Esophagus squamous epithelium (tissue), 5 donors: ENCODE measurements at regions of chr20 and their contacts with region 1.

Region 1: GRCh38 chr20:47356526-47357295 is at the start of gene ZMYND8:
- DNase-seq: peak; percentile 49
- H3K4me3 ChIP-seq: peak within 1 kb of the TSS in 3 of 4 donors; percentile 26 to 49 (median 27)
- H3K27ac ChIP-seq: peak within 1 kb of the TSS; percentile 97 to 100 (median 100)
- H3K4me1 ChIP-seq: peaks cover 81 to 100% (median 91%) of the 10 kb centered on the region in 3 donors
- H3K27me3 ChIP-seq: no peaks in the 10 kb centered on the region
- CTCF ChIP-seq: no peak
- POLR2A ChIP-seq: peak in 1 of 4 donors; percentile 41
- total RNA-seq, gene ZMYND8: 21.5 to 26.3 (median 24.3) TPM

Region 2: GRCh38 chr20:47317127-47317895 is 39.4 kb before region 1 on chr20:
- intact Hi-C with region 1: loop called (anchors 5 kb)
- DNase-seq: peak; percentile 18
- H3K4me3 ChIP-seq: peak overlapping the region in 3 of 4 donors; percentile 24 to 53 (median 35)
- H3K27ac ChIP-seq: peak overlapping the region; percentile 97 to 100 (median 98)
- H3K4me1 ChIP-seq: peaks cover 73 to 80% (median 76%) of the 10 kb centered on the region in 3 donors
- H3K27me3 ChIP-seq: no peaks in the 10 kb centered on the region
- CTCF ChIP-seq: peak in 3 of 6 experiments; percentile 8 to 30 (median 23)
- POLR2A ChIP-seq: peak in 2 of 4 donors; percentile 32 to 59